CD8-positive, alpha-beta T cell (primary cell): ENCODE measurements at regions of chr11 and their contacts with region 1.

Region 1: GRCh38 chr11:96342961-96343711 is at the start of gene MAML2:
- DNase-seq: peak; percentile 82 to 97 (median 89)
- ATAC-seq: peak; percentile 85
- H3K4me3 ChIP-seq: peak within 1 kb of the TSS; percentile 88 to 98
- H3K4me3 Mint-ChIP-seq: peak within 1 kb of the TSS; percentile 98
- H3K27ac ChIP-seq: peak within 1 kb of the TSS; percentile 66 to 83
- H3K27ac Mint-ChIP-seq: peak within 1 kb of the TSS; percentile 91
- H3K4me1 ChIP-seq: peaks cover 16% of the 10 kb centered on the region
- H3K4me1 Mint-ChIP-seq: peaks cover 39% of the 10 kb centered on the region
- H3K27me3 ChIP-seq: no peaks in the 10 kb centered on the region
- H3K27me3 Mint-ChIP-seq: no peaks in the 10 kb centered on the region
- CTCF ChIP-seq: peak; percentile 88
- total RNA-seq, gene MAML2: 41.2 to 42.3 TPM

Region 2: DNA sequence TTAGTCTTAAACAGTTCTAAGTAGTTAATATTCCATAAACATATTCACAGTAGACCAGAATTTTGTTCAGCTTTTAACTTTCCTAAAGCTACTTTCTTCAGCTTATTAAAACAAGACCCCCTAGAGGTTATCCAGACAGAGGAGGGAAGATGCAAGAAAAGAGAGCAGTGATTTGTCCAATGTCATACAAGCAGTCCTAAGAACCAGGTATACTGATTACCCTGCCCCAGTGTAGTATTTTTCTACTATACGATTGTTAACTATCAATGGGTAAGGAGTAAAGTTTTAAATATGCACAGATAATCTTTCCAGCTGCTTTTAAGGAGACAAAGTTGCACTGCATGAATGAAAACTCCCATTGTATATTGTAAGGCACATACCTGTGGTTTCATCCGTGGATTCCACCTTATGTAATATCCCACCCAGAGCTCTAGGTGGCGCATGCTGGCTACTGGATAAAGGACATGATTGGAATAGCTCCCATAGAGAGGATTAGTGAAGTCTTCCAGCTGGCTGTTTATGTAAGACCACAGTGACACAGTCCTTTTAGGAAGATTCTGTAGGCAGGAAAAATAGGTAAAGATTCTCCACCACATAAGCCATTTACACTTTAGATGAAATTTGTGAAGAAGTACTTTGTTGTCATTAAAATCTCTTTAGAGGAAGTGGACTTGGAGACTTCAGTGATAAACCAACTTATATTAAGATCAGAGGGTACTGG is 507.2 kb before region 1 on chr11:
- CTCF ChIA-PET with region 1: interaction called, 18 read pairs
- POLR2A ChIA-PET with region 1: interaction called, 5 read pairs
- intact Hi-C with region 1: loop called (anchors 1 to 2 kb)
- DNase-seq: peak; percentile 8 to 70 (median 55)
- ATAC-seq: peak; percentile 93
- H3K4me3 ChIP-seq: no peak overlapping the region
- H3K4me3 Mint-ChIP-seq: no peak overlapping the region
- H3K27ac ChIP-seq: no peak overlapping the region
- H3K27ac Mint-ChIP-seq: no peak overlapping the region
- H3K4me1 ChIP-seq: no peaks in the 10 kb centered on the region
- H3K4me1 Mint-ChIP-seq: no peaks in the 10 kb centered on the region
- H3K27me3 ChIP-seq: no peaks in the 10 kb centered on the region
- H3K27me3 Mint-ChIP-seq: no peaks in the 10 kb centered on the region
- CTCF ChIP-seq: peak; percentile 86

Region 3: DNA sequence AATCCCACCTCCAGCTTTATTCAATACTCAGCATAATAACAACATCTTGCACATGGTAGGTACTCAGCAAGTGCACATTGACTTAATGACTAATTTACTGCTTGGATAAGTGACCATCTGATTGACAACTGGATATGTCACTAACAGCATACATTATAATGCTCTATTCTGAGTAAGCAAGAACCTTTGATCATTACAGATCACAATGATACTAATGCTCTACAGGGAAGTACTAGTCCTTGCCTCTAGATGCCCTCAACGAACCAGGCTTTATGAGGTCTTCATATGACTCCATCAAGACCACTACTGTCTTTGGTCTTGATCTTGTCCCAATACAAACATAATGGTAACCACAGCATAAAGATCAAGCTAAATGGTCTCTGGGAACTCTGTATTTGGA is 251.7 kb before region 1 on chr11:
- CTCF ChIA-PET with region 1: interaction called, 134 read pairs
- POLR2A ChIA-PET with region 1: interaction called, 5 read pairs
- intact Hi-C with region 1: loop called (anchors 1 to 5 kb)
- DNase-seq: peak in 4 of 9 experiments; percentile 14 to 66 (median 42)
- ATAC-seq: peak; percentile 97
- H3K4me3 ChIP-seq: no peak overlapping the region
- H3K4me3 Mint-ChIP-seq: no peak overlapping the region
- H3K27ac ChIP-seq: no peak overlapping the region
- H3K27ac Mint-ChIP-seq: peak overlapping the region; percentile 90
- H3K4me1 ChIP-seq: peaks cover 24% of the 10 kb centered on the region
- H3K4me1 Mint-ChIP-seq: peaks cover 81% of the 10 kb centered on the region
- H3K27me3 ChIP-seq: no peaks in the 10 kb centered on the region
- H3K27me3 Mint-ChIP-seq: no peaks in the 10 kb centered on the region
- CTCF ChIP-seq: peak; percentile 41

Region 4: DNA sequence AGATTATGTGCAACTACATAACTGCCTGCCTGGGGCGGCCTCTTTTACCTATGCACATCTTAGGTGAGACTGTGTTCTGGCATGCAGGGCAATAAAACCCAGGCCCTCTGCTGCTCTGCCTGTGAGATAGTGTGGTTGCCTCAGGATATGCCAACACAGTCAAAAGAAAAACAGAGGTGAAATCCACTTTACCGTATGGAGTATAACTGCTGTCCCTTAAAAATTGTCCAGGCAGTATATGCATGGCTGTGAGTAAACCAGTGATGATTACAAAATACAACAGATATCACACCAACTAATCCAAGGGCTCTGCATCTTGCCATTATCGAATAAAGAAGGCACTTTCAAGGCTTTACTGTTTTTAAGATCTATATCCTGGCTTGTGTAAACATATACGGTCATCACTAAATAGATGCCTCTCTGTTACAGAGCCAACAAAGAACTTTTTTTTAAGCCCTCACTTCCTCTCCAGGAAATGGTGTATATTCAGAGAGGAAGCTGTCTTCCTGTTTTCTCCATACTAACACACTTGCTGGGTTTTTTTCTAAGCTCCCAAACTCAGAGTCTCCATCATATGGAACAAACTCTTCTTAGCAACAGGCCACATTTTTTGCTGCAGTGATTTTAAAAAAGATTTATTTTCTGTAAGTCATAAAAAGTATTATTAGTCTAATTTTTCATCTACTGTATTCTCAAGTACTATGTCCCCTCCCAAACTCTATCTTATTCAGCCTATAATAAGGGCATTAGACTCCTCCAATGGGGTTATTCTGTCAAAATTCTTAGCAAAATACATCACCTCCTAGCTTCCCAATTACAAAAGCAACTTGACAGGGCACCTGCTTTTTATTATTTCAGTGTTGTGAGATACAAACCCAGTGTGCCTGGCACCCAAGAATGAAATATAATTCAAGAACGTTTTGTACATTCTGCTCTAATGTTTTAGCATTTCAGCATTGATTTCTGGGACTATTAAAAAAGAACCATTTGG is 135.4 kb before region 1 on chr11:
- CTCF ChIA-PET with region 1: interaction called, 41 read pairs
- POLR2A ChIA-PET with region 1: interaction called, 3 read pairs
- intact Hi-C with region 1: loop called in 1 of 2 experiments (anchors 5 kb)
- DNase-seq: peak in 5 of 9 experiments; percentile 20 to 72 (median 43)
- ATAC-seq: peak; percentile 48
- H3K4me3 ChIP-seq: peak overlapping the region; percentile 4 to 26
- H3K4me3 Mint-ChIP-seq: peak overlapping the region; percentile 35
- H3K27ac ChIP-seq: peak overlapping the region; percentile 67 to 76
- H3K27ac Mint-ChIP-seq: peak overlapping the region; percentile 89
- H3K4me1 ChIP-seq: peaks cover 96% of the 10 kb centered on the region
- H3K4me1 Mint-ChIP-seq: peaks cover 84% of the 10 kb centered on the region
- H3K27me3 ChIP-seq: no peaks in the 10 kb centered on the region
- H3K27me3 Mint-ChIP-seq: no peaks in the 10 kb centered on the region
- CTCF ChIP-seq: no peak

Region 5: DNA sequence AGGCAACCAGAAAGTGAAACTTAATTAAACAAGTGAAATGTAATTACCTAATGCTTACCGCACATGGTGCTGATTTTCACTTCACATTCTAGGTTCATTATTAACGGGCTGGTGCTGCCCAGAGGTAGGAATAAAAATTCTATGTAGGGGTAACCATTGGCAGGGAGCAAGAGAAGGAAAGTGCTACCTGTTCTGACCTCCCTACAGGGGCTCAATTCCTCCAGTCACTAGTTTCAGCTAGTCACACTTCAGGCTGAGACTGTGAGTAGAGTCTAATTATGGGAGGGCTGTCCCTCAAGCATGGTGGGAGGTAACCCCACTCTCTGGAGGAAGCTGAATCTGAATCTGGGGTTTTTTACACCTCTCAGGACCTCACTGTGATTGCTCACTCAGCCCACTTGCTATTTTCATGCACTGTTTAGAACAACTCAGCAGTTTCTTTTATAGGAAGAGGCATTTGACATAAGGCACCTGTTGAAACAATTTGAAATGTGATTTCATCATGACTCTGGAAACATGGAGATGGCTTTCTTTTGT is 75.6 kb before region 1 on chr11:
- CTCF ChIA-PET with region 1: interaction called, 22 read pairs
- POLR2A ChIA-PET with region 1: interaction called, 3 read pairs
- intact Hi-C with region 1: no loop called
- DNase-seq: peak in 6 of 9 experiments; percentile 20 to 74 (median 36)
- ATAC-seq: peak; percentile 93
- H3K4me3 ChIP-seq: peak overlapping the region; percentile 7 to 10
- H3K4me3 Mint-ChIP-seq: peak overlapping the region; percentile 79
- H3K27ac ChIP-seq: peak overlapping the region; percentile 32 to 75
- H3K27ac Mint-ChIP-seq: peak overlapping the region; percentile 91
- H3K4me1 ChIP-seq: peaks cover 55% of the 10 kb centered on the region
- H3K4me1 Mint-ChIP-seq: peaks cover 86% of the 10 kb centered on the region
- H3K27me3 ChIP-seq: no peaks in the 10 kb centered on the region
- H3K27me3 Mint-ChIP-seq: no peaks in the 10 kb centered on the region
- CTCF ChIP-seq: no peak

Region 6: DNA sequence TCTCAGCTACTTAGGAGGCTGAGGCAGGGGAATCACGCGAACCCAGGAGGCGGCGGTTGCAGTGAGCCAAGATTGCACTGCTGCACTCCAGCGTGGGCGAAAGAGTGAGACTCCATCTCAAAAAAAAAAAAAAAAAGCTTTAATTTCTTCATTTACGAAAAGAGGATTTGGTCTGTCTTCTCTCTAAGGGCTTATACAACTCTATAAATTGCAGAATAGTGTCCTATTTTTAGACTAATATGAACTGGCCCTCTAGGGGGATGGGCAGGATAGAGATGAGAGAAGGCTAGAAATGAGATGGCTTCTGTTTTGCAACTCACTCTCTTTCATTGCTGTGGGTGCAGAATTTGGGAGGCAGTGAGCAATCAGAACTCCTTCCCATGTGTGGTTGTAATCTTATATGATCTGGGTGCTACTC is 11.4 kb before region 1 on chr11:
- CTCF ChIA-PET with region 1: interaction called, 13 read pairs
- POLR2A ChIA-PET with region 1: interaction called, 4 read pairs
- intact Hi-C with region 1: loop called in 1 of 2 experiments (anchors 2 kb)
- DNase-seq: no peak
- ATAC-seq: no peak
- H3K4me3 ChIP-seq: no peak overlapping the region
- H3K4me3 Mint-ChIP-seq: no peak overlapping the region
- H3K27ac ChIP-seq: no peak overlapping the region
- H3K27ac Mint-ChIP-seq: peak overlapping the region; percentile 66
- H3K4me1 ChIP-seq: peaks cover 78% of the 10 kb centered on the region
- H3K4me1 Mint-ChIP-seq: peaks cover 81% of the 10 kb centered on the region
- H3K27me3 ChIP-seq: no peaks in the 10 kb centered on the region
- H3K27me3 Mint-ChIP-seq: no peaks in the 10 kb centered on the region
- CTCF ChIP-seq: no peak